Right lobe of liver (tissue), 6 donors: ENCODE measurements at regions of chr19 and their contacts with region 1.

Region 1: DNA sequence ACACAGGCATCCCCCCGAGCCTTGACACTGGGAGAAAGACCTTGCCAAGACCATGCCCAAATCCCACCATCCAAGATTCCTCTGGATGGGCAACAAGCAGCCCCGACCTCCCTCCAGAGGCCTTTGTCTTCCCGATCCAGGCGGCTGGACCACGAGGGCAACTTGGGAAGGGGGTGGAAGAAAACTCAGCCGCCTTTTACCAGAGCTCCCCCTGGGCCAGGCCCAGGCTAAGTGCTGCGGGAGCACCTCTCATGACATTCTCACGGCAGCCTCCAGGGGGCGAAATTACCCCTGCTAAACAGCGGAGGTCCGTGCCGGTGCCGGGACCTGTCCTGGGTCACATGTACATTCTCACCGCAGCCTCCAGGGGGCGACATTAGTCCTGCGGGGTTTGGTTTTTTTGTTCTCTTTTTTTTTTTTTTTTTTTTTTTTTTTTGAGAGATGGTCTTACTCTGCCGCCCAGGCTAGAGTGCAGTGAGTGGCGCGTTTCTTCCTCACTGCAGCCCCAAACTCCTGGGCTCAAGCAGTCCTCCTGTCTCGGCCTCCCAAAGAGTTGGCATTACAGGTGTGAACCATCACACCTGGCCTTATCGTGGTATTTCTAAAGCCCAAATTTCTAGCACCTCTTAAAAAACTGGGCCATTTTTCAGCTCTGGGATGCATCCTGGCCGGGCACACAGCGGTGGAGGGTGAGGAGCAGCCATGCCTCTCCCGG is 2.1 kb upstream of the RSPH6A start:
- DNase-seq: peak; percentile 94
- ATAC-seq: peak; percentile 90 to 96 (median 92)
- H3K4me3 ChIP-seq: no peak overlapping the region
- H3K27ac ChIP-seq: no peak overlapping the region
- H3K4me1 ChIP-seq: no peaks in the 10 kb centered on the region
- H3K27me3 ChIP-seq: no peaks in the 10 kb centered on the region
- CTCF ChIP-seq: peak; percentile 96 to 98 (median 98)
- POLR2A ChIP-seq: no peak

Region 2: DNA sequence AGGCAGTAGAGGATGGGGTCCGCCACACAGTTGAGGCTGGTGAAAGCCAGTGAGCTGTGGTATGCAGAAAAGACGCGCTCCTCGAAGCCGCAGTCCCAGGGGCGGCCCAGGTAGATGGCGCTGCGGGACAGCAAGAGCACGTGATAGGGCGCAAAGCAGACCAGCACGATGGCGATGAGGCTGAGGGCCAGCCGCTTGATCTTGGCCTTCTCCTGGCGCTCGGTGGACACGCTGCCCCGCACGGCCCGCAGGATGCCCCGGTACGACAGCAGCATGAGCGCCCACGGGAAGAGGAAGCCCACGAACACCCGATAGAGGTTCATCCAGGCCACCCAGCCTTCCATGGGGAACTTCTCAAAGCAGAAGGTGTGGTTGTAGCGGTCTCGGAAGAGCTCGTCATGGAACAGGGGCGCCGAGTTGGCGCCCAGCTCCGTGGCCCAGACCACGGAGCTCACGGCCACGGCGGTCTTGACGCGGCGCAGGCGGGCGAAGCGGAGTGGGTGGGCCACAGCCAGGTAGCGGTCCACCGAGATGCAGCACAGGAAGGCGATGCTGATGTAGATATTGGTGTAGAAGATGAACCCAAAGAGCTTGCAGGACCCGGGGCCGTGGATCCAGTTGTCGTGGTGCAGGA is 226.0 kb before region 1 on chr19:
- intact Hi-C with region 1: no loop called
- DNase-seq: peak; percentile 63
- ATAC-seq: peak; percentile 61 to 78 (median 70)
- H3K4me3 ChIP-seq: no peak overlapping the region
- H3K27ac ChIP-seq: no peak overlapping the region
- H3K4me1 ChIP-seq: no peaks in the 10 kb centered on the region
- H3K27me3 ChIP-seq: no peaks in the 10 kb centered on the region
- CTCF ChIP-seq: peak; percentile 23 to 42 (median 30)
- POLR2A ChIP-seq: no peak

Region 3: GRCh38 chr19:45607071-45608029 is 209.8 kb before region 1 on chr19:
- intact Hi-C with region 1: no loop called
- DNase-seq: peak; percentile 73 to 77 (median 77)
- ATAC-seq: peak; percentile 89 to 97 (median 92)
- H3K4me3 ChIP-seq: no peak overlapping the region
- H3K27ac ChIP-seq: no peak overlapping the region
- H3K4me1 ChIP-seq: peaks cover 0 to 10% (median 0%) of the 10 kb centered on the region in 4 donors
- H3K27me3 ChIP-seq: no peaks in the 10 kb centered on the region
- CTCF ChIP-seq: peak; percentile 79 to 87 (median 86)
- POLR2A ChIP-seq: no peak

Region 4: GRCh38 chr19:45886427-45887199 is 69.4 kb after region 1 on chr19:
- intact Hi-C with region 1: loop called (anchors 10 kb)
- DNase-seq: peak; percentile 88 to 94 (median 92)
- ATAC-seq: peak; percentile 58 to 64 (median 62)
- H3K4me3 ChIP-seq: peak overlapping the region; percentile 69 to 83 (median 80)
- H3K27ac ChIP-seq: peak overlapping the region; percentile 78 to 86 (median 84)
- H3K4me1 ChIP-seq: peaks cover 0 to 28% (median 11%) of the 10 kb centered on the region in 4 donors
- H3K27me3 ChIP-seq: no peaks in the 10 kb centered on the region
- CTCF ChIP-seq: no peak
- POLR2A ChIP-seq: peak; percentile 82

Region 5: DNA sequence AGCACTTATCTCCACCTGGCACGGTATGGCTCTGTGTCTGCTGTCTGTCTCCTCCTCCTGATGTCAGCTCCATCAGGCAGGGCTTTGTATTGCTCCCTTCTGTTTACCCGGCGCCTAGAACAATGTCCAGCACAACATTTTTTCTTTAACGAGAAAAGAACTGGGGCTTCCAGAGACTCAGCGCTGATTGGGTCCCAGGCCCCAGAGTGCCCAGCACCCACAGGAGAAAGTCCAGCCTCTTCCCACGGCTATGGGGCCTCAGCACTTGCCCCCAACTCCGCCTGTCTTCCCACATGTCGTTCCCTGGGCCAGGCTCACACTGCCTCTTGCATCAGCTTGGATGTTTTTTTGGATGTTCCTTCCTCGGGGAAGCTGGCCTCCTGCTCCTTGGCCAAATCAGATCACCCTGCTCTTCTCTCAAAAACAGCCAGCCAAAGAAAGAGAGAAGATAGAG is 78.4 kb after region 1 on chr19:
- intact Hi-C with region 1: loop called in 1 of 2 experiments (anchors 10 kb)
- DNase-seq: no peak
- ATAC-seq: no peak
- H3K4me3 ChIP-seq: no peak overlapping the region
- H3K27ac ChIP-seq: no peak overlapping the region
- H3K4me1 ChIP-seq: peaks cover 0 to 9% (median 2%) of the 10 kb centered on the region in 4 donors
- H3K27me3 ChIP-seq: no peaks in the 10 kb centered on the region
- CTCF ChIP-seq: no peak
- POLR2A ChIP-seq: no peak

Region 6: DNA sequence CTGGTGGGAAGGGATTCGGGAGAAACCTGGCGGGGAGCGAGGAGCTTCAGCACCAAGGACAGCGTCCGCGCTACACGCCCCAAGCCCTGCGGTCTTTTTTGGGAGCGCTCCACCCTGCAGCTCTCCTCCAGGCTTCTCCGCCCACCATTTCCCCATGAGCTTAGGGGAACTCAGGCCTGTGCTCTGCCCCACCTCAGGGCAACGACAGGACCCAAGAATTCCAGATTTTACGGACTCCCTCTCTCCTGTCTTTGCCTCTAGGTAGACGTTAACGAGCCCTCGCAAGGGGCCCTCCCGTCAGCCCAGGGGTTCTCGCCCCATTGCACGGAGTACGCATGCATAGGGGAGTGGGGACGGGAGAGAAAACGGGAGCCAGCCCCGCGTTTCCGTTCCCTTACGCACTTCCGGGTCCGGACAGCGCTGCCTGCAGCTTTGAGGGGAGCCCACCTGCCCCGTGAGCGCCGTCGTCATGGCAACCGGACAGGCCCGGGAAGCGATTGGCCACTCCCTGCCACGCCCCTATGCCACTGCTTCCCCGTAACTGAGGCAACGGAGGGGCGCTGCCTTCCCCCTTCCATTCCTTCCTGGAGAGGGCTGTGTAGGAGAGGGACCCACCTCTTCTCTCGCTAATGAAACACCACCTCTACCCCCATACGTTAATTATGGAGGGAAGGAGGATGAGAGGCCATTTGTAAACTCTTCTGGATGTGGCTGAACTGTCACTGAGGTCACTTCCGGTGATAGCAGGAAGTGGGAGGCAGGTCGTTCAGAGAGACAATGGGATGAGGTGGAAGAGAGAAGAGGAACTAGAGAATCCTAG is 135.7 kb after region 1 on chr19:
- intact Hi-C with region 1: no loop called
- DNase-seq: peak in 1 of 3 donors; percentile 30
- ATAC-seq: peak; percentile 33 to 67 (median 51)
- H3K4me3 ChIP-seq: no peak overlapping the region
- H3K27ac ChIP-seq: no peak overlapping the region
- H3K4me1 ChIP-seq: no peaks in the 10 kb centered on the region
- H3K27me3 ChIP-seq: no peaks in the 10 kb centered on the region
- CTCF ChIP-seq: no peak
- POLR2A ChIP-seq: no peak